GM10248 (cell line): ENCODE measurements at regions of chr1 and their contacts with region 1.

Region 1: GRCh38 chr1:1122078-1122811 is 6.4 kb upstream of the C1orf159 start:
- DNase-seq: peak; percentile 91
- CTCF ChIP-seq: peak; percentile 94

Region 2: DNA sequence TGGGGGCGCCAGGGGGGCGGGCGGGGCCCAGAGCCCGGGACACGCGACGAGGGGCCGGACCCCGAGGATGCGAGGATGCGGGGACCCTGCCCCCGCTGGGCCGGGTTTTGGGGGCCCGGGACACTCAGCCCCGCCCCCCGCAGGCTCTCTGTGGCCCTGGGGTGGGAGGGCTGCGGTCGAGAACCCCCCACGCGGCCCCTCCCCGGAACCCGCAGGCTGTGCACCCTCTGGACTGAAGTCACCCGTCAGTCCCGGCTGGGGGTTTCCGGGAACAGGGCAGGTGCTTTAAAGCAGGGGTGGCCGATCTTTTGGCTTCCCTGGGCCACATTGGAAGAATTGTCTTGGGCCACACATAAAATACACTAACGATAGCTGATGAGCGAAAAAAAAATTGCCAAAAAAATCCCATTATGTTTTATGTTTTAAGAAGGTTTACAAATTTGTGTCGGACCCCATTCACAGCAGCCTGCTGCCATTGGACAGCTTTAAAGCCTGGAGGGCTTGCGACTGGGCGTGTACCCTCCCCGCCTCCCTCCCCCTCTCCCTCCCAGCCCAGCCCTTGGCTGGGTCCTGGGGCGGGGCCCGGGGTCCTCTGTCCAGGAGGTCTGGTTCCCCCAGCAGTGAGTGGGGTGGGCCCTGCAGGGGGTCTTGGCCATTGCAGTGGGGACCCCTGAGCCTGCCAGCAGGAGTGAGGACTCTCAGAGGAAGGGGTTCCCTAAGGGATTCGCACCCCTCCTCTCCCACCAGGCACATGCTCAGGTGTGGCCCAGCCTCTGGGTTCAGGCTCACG is 15.2 kb after region 1 on chr1:
- CTCF ChIA-PET with region 1: interaction called, 12 read pairs
- POLR2A ChIA-PET with region 1: no interaction called
- DNase-seq: peak; percentile 89
- CTCF ChIP-seq: no peak

Region 3: GRCh38 chr1:1171546-1172340 is 49.5 kb after region 1 on chr1:
- CTCF ChIA-PET with region 1: interaction called, 17 read pairs
- POLR2A ChIA-PET with region 1: no interaction called
- DNase-seq: no peak
- CTCF ChIP-seq: no peak

Region 4: GRCh38 chr1:1225238-1225845 is 103.1 kb after region 1 on chr1:
- CTCF ChIA-PET with region 1: interaction called, 10 read pairs
- POLR2A ChIA-PET with region 1: no interaction called
- DNase-seq: no peak
- CTCF ChIP-seq: no peak

Region 5: DNA sequence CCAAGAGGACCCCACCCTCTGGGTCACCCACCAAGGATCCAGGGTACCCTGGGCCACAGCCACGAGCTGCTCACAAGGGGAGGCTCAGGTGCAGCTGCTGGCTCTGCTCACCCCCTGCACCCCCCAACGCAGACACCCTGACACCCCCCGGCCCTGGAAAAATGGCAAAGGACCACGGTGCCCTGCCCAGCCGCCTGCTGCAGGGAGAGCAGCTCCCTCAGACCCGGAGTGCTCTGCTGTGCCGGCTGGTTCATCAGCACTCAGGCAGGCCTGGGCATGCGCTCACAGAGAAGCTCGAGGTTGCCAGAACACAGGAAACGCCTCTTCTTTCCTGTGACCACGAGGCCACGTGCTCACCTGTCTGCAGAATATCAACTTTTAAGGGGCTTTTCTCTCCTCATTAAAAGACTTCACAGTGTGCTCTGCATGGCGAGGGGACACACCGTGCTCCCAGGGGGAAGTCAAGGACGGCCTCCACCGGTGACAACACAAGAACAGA is 128.6 kb after region 1 on chr1:
- CTCF ChIA-PET with region 1: interaction called, 54 read pairs
- POLR2A ChIA-PET with region 1: no interaction called
- DNase-seq: peak; percentile 83
- CTCF ChIP-seq: no peak

Region 6: GRCh38 chr1:1318131-1318652 is 195.9 kb after region 1 on chr1:
- CTCF ChIA-PET with region 1: no interaction called
- POLR2A ChIA-PET with region 1: no interaction called
- DNase-seq: no peak
- CTCF ChIP-seq: no peak